Ovary (tissue), 10 donors: ENCODE measurements at regions of chr7 and their contacts with region 1.

Region 1: DNA sequence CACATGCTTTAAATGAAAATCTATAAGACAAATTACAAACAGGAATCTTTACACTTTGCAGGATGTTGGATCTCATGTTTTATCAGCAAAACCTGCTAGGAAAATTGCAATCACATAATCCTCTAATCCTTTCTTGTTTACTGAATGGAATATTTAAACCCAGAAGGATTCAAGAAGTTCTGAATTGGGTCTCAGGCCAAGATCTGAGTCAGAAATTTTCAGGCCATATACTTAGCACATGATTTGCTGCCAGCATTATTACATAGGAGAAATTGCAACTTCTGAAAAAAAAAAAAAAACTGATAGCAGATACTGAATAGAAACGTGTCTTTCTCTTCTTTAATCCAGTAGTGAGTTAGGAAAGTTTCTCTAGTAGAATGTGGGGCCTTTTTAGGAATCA is 1005.3 kb upstream of the POT1 start:
- DNase-seq: no peak
- H3K4me3 ChIP-seq: no peak overlapping the region
- H3K27ac ChIP-seq: no peak overlapping the region
- H3K4me1 ChIP-seq: no peaks in the 10 kb centered on the region
- H3K27me3 ChIP-seq: no peaks in the 10 kb centered on the region
- CTCF ChIP-seq: no peak
- EP300 ChIP-seq: no peak
- POLR2A ChIP-seq: no peak

Region 2: DNA sequence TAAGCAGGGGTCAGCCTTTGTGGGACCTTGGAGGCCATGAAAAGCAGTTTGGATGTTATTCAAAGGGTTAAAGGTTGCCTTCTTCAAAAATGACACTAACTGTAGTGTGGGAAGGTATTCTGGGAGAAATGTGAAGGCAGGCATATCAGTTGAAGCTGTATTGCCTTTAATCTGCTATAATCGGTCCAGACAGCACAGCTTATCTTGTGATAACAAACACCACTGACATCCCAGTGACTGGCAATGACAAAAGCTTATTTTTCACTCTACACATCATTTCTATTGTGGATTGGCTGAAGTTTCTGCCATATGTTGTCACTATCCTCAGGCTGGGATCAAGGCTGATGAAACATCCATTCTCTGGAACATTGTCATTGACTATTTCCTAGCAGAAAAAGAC is 168.6 kb after region 1 on chr7:
- intact Hi-C with region 1: no loop called
- DNase-seq: no peak
- H3K4me3 ChIP-seq: no peak overlapping the region
- H3K27ac ChIP-seq: no peak overlapping the region
- H3K4me1 ChIP-seq: no peaks in the 10 kb centered on the region
- H3K27me3 ChIP-seq: no peaks in the 10 kb centered on the region
- CTCF ChIP-seq: no peak
- EP300 ChIP-seq: no peak
- POLR2A ChIP-seq: no peak

Region 3: DNA sequence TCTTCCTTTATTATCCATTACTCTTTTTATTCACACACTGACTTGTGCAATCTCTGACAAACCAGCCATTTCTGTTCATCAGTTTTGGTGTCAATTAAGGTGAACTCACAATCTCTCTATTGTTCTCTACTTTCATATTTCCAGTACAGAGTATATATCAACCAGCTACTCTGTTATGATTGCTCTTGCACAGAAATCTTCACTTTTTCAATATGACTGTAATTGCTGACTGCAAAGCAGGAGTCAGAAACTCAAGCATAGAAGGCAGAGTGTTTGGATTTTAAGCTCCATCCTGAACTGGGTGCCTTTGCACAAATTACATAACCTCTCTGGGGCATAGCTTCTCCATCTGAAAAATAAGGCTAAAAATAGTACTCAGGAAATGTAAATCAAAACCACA is 275.7 kb after region 1 on chr7:
- intact Hi-C with region 1: loop called in 1 of 4 experiments (anchors 5 kb)
- DNase-seq: no peak
- H3K4me3 ChIP-seq: no peak overlapping the region
- H3K27ac ChIP-seq: no peak overlapping the region
- H3K4me1 ChIP-seq: no peaks in the 10 kb centered on the region
- H3K27me3 ChIP-seq: no peaks in the 10 kb centered on the region
- CTCF ChIP-seq: no peak
- EP300 ChIP-seq: no peak
- POLR2A ChIP-seq: no peak